ENCODE measurements at regions of chrX and their contacts with region 1.

Region 1: GRCh38 chrX:12292996-12293765 is 154.9 kb downstream of the FRMPD4 start:
- DNase-seq: no peak
- H3K4me3 ChIP-seq: no peak overlapping the region
- H3K27ac ChIP-seq: no peak overlapping the region
- H3K4me1 ChIP-seq: no peaks in the 10 kb centered on the region
- H3K27me3 ChIP-seq: no peaks in the 10 kb centered on the region
- CTCF ChIP-seq: no peak

Region 2: DNA sequence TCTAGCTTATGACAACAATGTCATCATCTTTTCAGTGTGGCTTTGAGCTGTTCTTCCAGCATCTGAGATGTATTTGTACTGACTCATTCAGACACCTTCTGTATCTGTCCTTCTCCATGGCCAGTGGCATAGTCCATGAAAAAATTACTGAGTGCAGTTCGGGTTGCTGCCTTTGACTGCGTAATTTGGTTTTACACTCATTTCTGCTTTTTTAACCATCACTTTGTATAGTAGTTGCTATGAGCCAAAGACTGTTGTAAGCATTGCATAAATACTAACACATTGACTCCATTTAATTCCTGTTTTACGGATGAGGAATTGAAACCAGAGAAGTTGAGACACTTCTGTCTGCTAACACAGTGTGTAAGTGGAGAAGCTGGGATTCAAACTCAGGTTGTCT is 1482.1 kb before region 1 on chrX:
- intact Hi-C with region 1: loop called (anchors 5 kb)
- DNase-seq: no peak
- H3K4me3 ChIP-seq: no peak overlapping the region
- H3K27ac ChIP-seq: no peak overlapping the region
- H3K4me1 ChIP-seq: no peaks in the 10 kb centered on the region
- H3K27me3 ChIP-seq: no peaks in the 10 kb centered on the region
- CTCF ChIP-seq: no peak

Measured in tibial artery (tissue), 4 donors.